Heart left ventricle (tissue), 16 donors: ENCODE measurements at regions of chr6 and their contacts with region 1.

Region 1: GRCh38 chr6:142187209-142187608 is 40.1 kb downstream of the VTA1 start:
- DNase-seq: peak in 4 of 5 donors; percentile 20 to 79 (median 53)
- ATAC-seq: peak; percentile 26 to 87 (median 83)
- H3K4me3 ChIP-seq: no peak overlapping the region
- H3K27ac ChIP-seq: peak overlapping the region in 4 of 12 donors; percentile 8 to 33 (median 16)
- H3K4me1 ChIP-seq: peaks cover 0 to 19% (median 9%) of the 10 kb centered on the region in 12 donors
- H3K27me3 ChIP-seq: no peaks in the 10 kb centered on the region
- CTCF ChIP-seq: no peak
- POLR2A ChIP-seq: no peak

Region 2: DNA sequence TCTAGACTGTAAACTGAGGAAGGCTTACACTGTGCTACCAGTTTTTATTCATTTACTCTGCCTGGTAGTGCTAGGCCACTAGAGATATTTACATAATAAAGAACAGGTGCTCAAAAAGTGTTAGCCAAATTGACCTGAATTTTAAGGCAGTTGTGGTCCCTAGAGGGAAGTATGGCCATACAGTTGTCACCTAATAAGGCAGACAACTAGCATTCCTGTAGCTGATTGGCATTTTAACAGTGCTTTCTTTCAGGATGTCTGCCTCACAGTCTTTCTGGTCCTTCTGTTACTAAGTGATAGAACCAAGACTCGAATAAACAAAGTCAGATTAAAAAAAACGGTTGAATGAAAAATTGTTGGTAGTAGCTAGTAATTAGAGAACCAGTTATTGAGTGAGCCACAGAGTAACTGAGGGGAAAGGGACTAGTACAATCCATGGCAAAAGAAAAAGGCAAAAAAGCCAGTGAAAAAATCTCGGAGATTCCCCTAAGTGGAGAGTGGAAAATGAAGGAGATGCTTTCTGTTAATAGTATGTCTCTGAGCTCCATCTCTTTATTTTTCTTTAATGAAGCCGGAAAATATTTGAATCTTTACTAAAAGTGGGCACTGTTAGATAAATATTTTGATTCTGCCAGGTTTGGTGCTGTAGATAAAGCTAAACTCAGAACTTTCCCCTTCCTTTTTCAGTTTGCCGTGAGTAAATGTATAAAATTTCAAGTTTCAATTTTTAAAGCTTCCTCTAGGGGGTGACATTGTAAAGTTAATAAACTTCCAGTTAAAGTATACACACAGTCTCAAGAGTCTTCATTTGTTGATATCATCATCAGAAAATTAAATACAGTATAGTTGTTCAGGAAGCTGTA is 31.1 kb before region 1 on chr6:
- intact Hi-C with region 1: loop called in 1 of 10 experiments (anchors 5 kb)
- DNase-seq: no peak
- ATAC-seq: peak in 1 of 4 donors; percentile 54
- H3K4me3 ChIP-seq: no peak overlapping the region
- H3K27ac ChIP-seq: no peak overlapping the region
- H3K4me1 ChIP-seq: peaks cover 0 to 24% (median 2%) of the 10 kb centered on the region in 12 donors
- H3K27me3 ChIP-seq: no peaks in the 10 kb centered on the region
- CTCF ChIP-seq: peak; percentile 28 to 54 (median 44)
- POLR2A ChIP-seq: no peak